Left colon (tissue), 2 donors: ENCODE measurements at regions of chr12 and their contacts with region 1.

Region 1: GRCh38 chr12:2034633-2035430 is 18.0 kb upstream of the CACNA1C start:
- DNase-seq: peak; percentile 80 to 96
- ATAC-seq: peak; percentile 99

Region 2: DNA sequence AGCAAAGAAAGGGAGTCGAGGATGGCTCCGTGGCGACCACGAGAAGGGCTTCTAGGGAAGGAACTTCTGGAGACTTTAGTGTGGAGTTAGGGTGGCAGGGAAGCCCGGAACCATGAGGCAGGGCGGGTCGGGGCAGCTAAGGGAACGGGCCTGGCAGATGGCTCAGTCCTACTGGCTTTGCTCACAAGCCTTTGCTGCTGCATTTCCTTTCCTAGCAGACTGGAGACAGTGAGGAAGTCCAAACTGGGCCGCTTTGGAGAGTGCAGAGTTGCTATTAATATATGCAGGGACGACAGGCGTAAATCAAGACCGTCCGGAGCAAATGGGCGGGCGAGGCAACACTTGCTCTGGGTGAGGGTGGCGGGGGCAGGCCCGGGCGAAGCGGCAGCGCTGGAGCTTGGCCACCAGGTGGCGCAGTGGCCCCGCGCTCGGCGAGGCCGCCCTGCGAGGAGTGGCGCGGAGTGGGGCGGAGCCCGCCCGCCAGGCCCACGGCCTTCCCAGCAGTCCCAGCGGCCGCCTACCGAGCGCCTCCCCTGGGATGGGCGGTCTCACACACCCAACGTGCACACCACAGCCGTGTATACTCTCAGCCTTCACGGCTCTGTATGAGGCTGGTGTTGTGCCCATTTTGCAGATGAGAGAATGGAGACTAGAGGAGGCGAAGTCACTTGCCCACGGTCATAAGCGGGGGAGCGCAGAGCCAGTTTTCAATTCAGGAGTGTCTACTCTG is 238.9 kb before region 1 on chr12:
- intact Hi-C with region 1: loop called in 1 of 2 experiments (anchors 5 kb)
- DNase-seq: peak; percentile 94 to 95
- ATAC-seq: peak; percentile 88

Region 3: GRCh38 chr12:1939801-1940607 is 94.8 kb before region 1 on chr12:
- intact Hi-C with region 1: loop called in 1 of 2 experiments (anchors 5 kb)
- DNase-seq: peak; percentile 83 to 92
- ATAC-seq: peak; percentile 56

Region 4: DNA sequence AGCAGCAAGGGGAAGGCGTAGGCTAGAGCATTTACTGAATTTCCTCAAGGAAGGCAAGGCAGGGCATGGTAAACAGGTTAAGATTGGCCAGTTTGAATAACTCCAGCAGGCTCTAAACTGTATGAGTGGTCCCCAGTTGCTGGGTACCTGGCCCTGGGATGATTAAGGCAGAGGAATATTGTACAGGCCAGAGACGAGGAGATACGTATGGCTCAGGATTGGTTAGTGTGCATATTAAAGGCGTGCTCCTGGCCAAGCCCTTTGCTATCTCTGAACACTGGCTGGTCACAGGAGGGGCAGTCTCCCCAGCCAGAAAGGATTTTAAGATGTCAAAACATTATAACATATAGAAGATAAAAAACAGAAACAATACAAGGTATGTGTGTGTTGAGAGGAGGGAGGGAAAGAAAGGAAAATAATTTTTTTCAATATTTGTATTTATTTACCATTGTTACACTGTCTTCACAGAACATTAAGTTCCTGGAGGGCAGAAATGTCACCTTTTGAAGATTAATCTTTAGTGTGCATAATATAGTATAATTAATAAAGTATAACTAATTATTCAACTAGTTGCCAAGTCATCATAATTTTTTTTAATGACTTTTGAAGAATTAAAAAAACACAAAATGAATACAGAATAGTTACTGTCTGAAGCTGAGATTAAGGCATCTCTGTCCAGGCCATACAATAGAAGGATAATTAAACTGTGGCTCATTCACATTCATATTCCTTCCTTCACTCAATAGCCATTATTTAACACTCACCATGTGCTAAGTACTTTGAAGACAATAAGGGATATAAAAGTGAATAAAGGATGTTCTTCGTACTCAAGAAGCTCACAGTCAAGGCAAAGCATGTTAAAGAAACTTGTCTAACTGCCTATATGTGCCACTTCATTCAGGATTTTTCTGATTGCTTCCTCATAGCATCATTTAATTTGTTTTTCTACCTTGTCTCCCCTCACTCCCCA is 72.5 kb before region 1 on chr12:
- intact Hi-C with region 1: no loop called
- DNase-seq: no peak
- ATAC-seq: no peak

Region 5: DNA sequence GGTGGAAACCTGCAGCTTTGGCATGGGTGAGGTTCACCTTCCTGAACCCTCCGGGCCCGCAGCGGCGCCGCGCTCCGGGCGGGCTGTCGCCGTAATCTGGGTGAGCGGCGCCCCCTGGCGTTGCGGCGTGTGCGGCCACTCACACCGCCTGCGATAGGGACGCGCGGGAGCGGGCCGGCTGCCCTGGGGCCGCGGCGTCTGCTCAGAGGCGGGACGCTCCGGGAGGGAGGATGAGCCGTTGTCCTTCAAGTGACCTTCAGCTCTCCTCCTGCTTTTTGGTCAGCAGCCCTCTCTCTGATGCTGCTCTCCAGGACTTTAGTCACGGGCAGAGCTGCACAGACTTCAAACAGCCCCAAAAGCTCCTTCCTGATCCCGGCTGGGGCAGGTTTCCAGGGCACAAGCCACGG is 548.3 kb after region 1 on chr12:
- intact Hi-C with region 1: loop called in 1 of 2 experiments (anchors 5 kb)
- DNase-seq: peak; percentile 36 to 84
- ATAC-seq: peak; percentile 84